CD8-positive, alpha-beta T cell (primary cell): ENCODE measurements at regions of chr4 and their contacts with region 1.

Region 1: GRCh38 chr4:1346781-1347409 is at the start of gene UVSSA:
- DNase-seq: peak; percentile 100
- ATAC-seq: peak; percentile 90
- H3K4me3 ChIP-seq: peak within 1 kb of the TSS; percentile 72 to 96
- H3K4me3 Mint-ChIP-seq: peak within 1 kb of the TSS; percentile 89
- H3K27ac ChIP-seq: peak within 1 kb of the TSS; percentile 89 to 92
- H3K27ac Mint-ChIP-seq: peak within 1 kb of the TSS; percentile 95
- H3K4me1 ChIP-seq: peaks cover 23% of the 10 kb centered on the region
- H3K4me1 Mint-ChIP-seq: peaks cover 42% of the 10 kb centered on the region
- H3K27me3 ChIP-seq: no peaks in the 10 kb centered on the region
- H3K27me3 Mint-ChIP-seq: no peaks in the 10 kb centered on the region
- CTCF ChIP-seq: no peak
- total RNA-seq, gene UVSSA: 27.3 to 27.5 TPM

Region 2: GRCh38 chr4:674172-675035 is 672.5 kb before region 1 on chr4 and contains the starts of genes ATP5ME and MYL5:
- CTCF ChIA-PET with region 1: no interaction called
- POLR2A ChIA-PET with region 1: no interaction called
- intact Hi-C with region 1: loop called in 1 of 2 experiments (anchors 2 kb)
- DNase-seq: peak; percentile 95 to 99 (median 98)
- ATAC-seq: peak; percentile 91
- H3K4me3 ChIP-seq: peak within 1 kb of the TSS; percentile 79 to 92
- H3K4me3 Mint-ChIP-seq: peak within 1 kb of the TSS; percentile 91
- H3K27ac ChIP-seq: peak within 1 kb of the TSS; percentile 93 to 94
- H3K27ac Mint-ChIP-seq: peak within 1 kb of the TSS; percentile 88
- H3K4me1 ChIP-seq: peaks cover 21% of the 10 kb centered on the region
- H3K4me1 Mint-ChIP-seq: peaks cover 7% of the 10 kb centered on the region
- H3K27me3 ChIP-seq: no peaks in the 10 kb centered on the region
- H3K27me3 Mint-ChIP-seq: no peaks in the 10 kb centered on the region
- CTCF ChIP-seq: peak; percentile 87
- total RNA-seq, gene ATP5ME: 113 to 114 TPM
- total RNA-seq, gene MYL5: 27.2 to 28.7 TPM

Region 3: DNA sequence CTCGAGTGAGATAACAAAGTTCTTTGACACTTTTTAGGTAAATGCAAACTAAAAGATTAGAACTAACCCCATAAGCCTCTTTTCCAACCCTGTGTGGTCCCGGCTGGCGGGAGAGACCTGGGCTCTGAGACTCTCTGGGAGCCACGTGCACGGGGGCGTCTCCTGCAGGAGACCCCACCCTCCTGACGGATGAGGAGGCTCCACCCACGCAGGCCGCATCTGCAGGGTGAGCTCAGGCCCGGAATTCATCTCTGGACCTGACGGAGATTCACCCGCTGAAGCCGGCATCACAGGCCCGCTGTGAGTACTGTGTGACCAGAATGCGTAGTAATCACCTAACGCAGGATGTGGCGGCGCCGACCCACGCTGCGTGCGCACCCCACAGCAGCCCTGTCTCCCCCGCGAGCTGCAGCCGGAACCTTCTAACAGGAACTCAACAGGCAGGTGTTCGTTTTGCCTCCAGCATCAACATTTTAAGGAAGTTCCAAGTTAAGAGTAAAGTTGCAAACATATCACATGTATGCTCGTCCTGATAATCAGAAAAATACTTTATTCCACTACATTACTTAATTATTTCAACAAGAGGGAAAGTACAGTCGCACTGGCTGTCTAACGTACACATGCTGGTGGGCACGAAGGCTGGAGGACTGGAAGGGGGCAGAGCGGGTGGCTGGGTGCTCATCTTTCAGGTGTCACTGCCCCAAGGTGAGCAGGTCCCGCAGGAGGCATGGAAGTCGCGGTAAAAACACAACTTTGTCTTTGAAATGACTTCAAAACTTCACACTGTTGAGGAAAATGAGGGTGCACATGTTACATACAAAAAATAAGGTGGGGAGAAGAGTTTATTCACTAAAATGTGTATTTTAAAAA is 290.9 kb before region 1 on chr4:
- CTCF ChIA-PET with region 1: no interaction called
- POLR2A ChIA-PET with region 1: no interaction called
- intact Hi-C with region 1: loop called in 1 of 2 experiments (anchors 2 kb)
- DNase-seq: peak; percentile 76 to 96 (median 85)
- ATAC-seq: peak; percentile 94
- H3K4me3 ChIP-seq: peak overlapping the region; percentile 42 to 48
- H3K4me3 Mint-ChIP-seq: peak overlapping the region; percentile 72
- H3K27ac ChIP-seq: peak overlapping the region; percentile 70 to 76
- H3K27ac Mint-ChIP-seq: peak overlapping the region; percentile 92
- H3K4me1 ChIP-seq: peaks cover 16% of the 10 kb centered on the region
- H3K4me1 Mint-ChIP-seq: peaks cover 18% of the 10 kb centered on the region
- H3K27me3 ChIP-seq: no peaks in the 10 kb centered on the region
- H3K27me3 Mint-ChIP-seq: no peaks in the 10 kb centered on the region
- CTCF ChIP-seq: no peak

Region 4: GRCh38 chr4:1249148-1249730 is 97.7 kb before region 1 on chr4:
- CTCF ChIA-PET with region 1: interaction called, 16 read pairs
- POLR2A ChIA-PET with region 1: interaction called, 33 read pairs
- intact Hi-C with region 1: loop called (anchors 1 kb)
- DNase-seq: peak; percentile 71 to 94 (median 85)
- ATAC-seq: peak; percentile 66
- H3K4me3 ChIP-seq: peak overlapping the region; percentile 76 to 82
- H3K4me3 Mint-ChIP-seq: peak overlapping the region; percentile 89
- H3K27ac ChIP-seq: peak overlapping the region; percentile 86 to 93
- H3K27ac Mint-ChIP-seq: peak overlapping the region; percentile 95
- H3K4me1 ChIP-seq: peaks cover 72% of the 10 kb centered on the region
- H3K4me1 Mint-ChIP-seq: peaks cover 69% of the 10 kb centered on the region
- H3K27me3 ChIP-seq: no peaks in the 10 kb centered on the region
- H3K27me3 Mint-ChIP-seq: no peaks in the 10 kb centered on the region
- CTCF ChIP-seq: no peak

Region 5: GRCh38 chr4:1318488-1319213 is 28.2 kb before region 1 on chr4:
- CTCF ChIA-PET with region 1: interaction called, 5 read pairs
- POLR2A ChIA-PET with region 1: no interaction called
- intact Hi-C with region 1: loop called (anchors 1 kb)
- DNase-seq: peak in 6 of 9 experiments; percentile 20 to 63 (median 44)
- ATAC-seq: no peak
- H3K4me3 ChIP-seq: no peak overlapping the region
- H3K4me3 Mint-ChIP-seq: no peak overlapping the region
- H3K27ac ChIP-seq: no peak overlapping the region
- H3K27ac Mint-ChIP-seq: no peak overlapping the region
- H3K4me1 ChIP-seq: peaks cover 8% of the 10 kb centered on the region
- H3K4me1 Mint-ChIP-seq: peaks cover 13% of the 10 kb centered on the region
- H3K27me3 ChIP-seq: no peaks in the 10 kb centered on the region
- H3K27me3 Mint-ChIP-seq: no peaks in the 10 kb centered on the region
- CTCF ChIP-seq: peak; percentile 36

Region 6: DNA sequence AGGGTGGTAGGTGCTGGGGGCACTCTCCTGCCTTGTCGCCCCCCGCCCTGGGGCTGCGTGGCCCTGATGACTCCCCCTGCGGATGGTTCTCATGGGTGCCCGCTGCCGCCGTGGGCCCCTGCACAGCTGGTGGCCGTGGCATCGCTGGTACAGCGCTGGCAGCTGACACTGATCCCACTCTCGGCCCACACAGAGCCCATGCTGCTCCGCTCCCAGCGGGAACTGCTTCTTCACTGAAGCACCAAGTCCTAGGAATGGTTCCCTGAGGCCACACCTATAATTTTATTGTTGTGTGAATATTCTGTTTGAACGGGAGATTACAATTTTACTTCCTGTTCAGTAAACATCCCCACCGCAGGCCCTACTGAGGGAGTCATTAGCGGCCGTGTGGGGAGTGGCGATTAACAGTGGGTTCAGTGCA is 198.0 kb after region 1 on chr4:
- CTCF ChIA-PET with region 1: no interaction called
- POLR2A ChIA-PET with region 1: no interaction called
- intact Hi-C with region 1: no loop called
- DNase-seq: peak in 4 of 9 experiments; percentile 25 to 44 (median 30)
- ATAC-seq: peak; percentile 43
- H3K4me3 ChIP-seq: no peak overlapping the region
- H3K4me3 Mint-ChIP-seq: peak overlapping the region; percentile 73
- H3K27ac ChIP-seq: no peak overlapping the region
- H3K27ac Mint-ChIP-seq: peak overlapping the region; percentile 92
- H3K4me1 ChIP-seq: peaks cover 20% of the 10 kb centered on the region
- H3K4me1 Mint-ChIP-seq: peaks cover 21% of the 10 kb centered on the region
- H3K27me3 ChIP-seq: no peaks in the 10 kb centered on the region
- H3K27me3 Mint-ChIP-seq: peaks cover 3% of the 10 kb centered on the region
- CTCF ChIP-seq: no peak

Region 7: GRCh38 chr4:1712216-1713002 is 365.5 kb after region 1 on chr4 and contains the start of gene SLBP:
- CTCF ChIA-PET with region 1: no interaction called
- POLR2A ChIA-PET with region 1: no interaction called
- intact Hi-C with region 1: loop called in 1 of 2 experiments (anchors 2 kb)
- DNase-seq: peak; percentile 96 to 99 (median 99)
- ATAC-seq: peak; percentile 87
- H3K4me3 ChIP-seq: peak within 1 kb of the TSS; percentile 82 to 95
- H3K4me3 Mint-ChIP-seq: peak within 1 kb of the TSS; percentile 94
- H3K27ac ChIP-seq: peak within 1 kb of the TSS; percentile 95 to 97
- H3K27ac Mint-ChIP-seq: peak within 1 kb of the TSS; percentile 94
- H3K4me1 ChIP-seq: peaks cover 42% of the 10 kb centered on the region
- H3K4me1 Mint-ChIP-seq: peaks cover 60% of the 10 kb centered on the region
- H3K27me3 ChIP-seq: no peaks in the 10 kb centered on the region
- H3K27me3 Mint-ChIP-seq: no peaks in the 10 kb centered on the region
- CTCF ChIP-seq: no peak
- total RNA-seq, gene SLBP: 61.2 to 62.6 TPM

Region 8: GRCh38 chr4:3074078-3074795 is 1727.3 kb after region 1 on chr4 and contains the starts of genes HTT and HTT-AS:
- CTCF ChIA-PET with region 1: no interaction called
- POLR2A ChIA-PET with region 1: no interaction called
- intact Hi-C with region 1: loop called in 1 of 2 experiments (anchors 5 kb)
- DNase-seq: peak; percentile 93 to 98 (median 97)
- ATAC-seq: peak; percentile 83
- H3K4me3 ChIP-seq: peak within 1 kb of the TSS; percentile 88 to 100
- H3K4me3 Mint-ChIP-seq: peak within 1 kb of the TSS; percentile 93
- H3K27ac ChIP-seq: peak within 1 kb of the TSS; percentile 69 to 89
- H3K27ac Mint-ChIP-seq: peak within 1 kb of the TSS; percentile 95
- H3K4me1 ChIP-seq: peaks cover 18% of the 10 kb centered on the region
- H3K4me1 Mint-ChIP-seq: peaks cover 25% of the 10 kb centered on the region
- H3K27me3 ChIP-seq: no peaks in the 10 kb centered on the region
- H3K27me3 Mint-ChIP-seq: no peaks in the 10 kb centered on the region
- CTCF ChIP-seq: no peak
- total RNA-seq, gene HTT: 60.3 to 69.4 TPM
- total RNA-seq, gene HTT-AS: not detected